Activated CD4-positive, alpha-beta T cell treated with anti-CD3 and anti-CD28 coated beads, Interleukin-2, amount 10 ng/mL, durations not matched to agents 7 days and 5 days (primary cell): ENCODE measurements at regions of chr13 and their contacts with region 1.

Region 1: GRCh38 chr13:29059800-29060199 is 239.7 kb downstream of the MTUS2 start:
- DNase-seq: no peak
- H3K4me3 Mint-ChIP-seq: no peak overlapping the region
- H3K27ac Mint-ChIP-seq: no peak overlapping the region
- H3K4me1 Mint-ChIP-seq: no peaks in the 10 kb centered on the region
- H3K27me3 Mint-ChIP-seq: peaks cover 3% of the 10 kb centered on the region

Region 2: GRCh38 chr13:29049524-29049923 is 10.3 kb before region 1 on chr13:
- CTCF ChIA-PET with region 1: no interaction called
- POLR2A ChIA-PET with region 1: no interaction called
- DNase-seq: no peak
- H3K4me3 Mint-ChIP-seq: no peak overlapping the region
- H3K27ac Mint-ChIP-seq: no peak overlapping the region
- H3K4me1 Mint-ChIP-seq: no peaks in the 10 kb centered on the region
- H3K27me3 Mint-ChIP-seq: no peaks in the 10 kb centered on the region

Region 3: DNA sequence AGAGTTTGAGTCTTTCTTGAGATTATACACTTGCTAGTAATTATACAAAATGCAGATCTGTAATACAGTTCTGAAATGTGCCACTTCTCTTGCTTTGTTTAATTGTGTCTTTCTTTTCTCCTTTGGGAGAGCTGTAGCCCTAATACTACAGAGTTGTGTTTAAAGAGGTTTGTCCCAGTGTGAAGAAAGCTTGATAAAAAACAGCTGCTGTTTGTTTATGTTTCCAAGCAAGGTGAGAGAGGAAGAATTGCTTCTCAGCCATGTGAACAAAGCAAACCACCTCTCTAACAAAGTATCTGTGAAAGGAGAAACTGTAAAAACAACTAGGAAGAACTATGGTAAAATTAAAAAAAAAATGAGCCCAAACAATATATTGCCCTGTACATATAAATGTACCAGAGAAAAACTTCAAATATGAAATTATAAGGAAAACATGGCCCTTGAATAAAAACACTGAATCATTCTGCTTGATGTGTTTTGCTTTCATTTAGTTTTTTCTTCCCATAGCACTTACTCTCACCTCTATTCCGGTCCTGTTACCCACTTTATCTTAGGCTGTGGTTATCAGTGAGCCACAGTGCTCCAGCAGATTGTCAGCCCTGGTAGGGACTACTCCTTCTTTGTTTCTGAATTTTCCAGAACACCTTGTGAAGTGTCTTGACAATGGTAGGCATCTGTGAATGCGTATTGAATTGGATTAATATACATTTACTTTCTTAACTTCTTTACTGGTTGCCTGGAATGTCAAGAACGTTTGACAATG is 17.4 kb after region 1 on chr13:
- CTCF ChIA-PET with region 1: no interaction called
- POLR2A ChIA-PET with region 1: interaction called, 11 read pairs
- DNase-seq: no peak
- H3K4me3 Mint-ChIP-seq: no peak overlapping the region
- H3K27ac Mint-ChIP-seq: no peak overlapping the region
- H3K4me1 Mint-ChIP-seq: peaks cover 18% of the 10 kb centered on the region
- H3K27me3 Mint-ChIP-seq: peaks cover 10% of the 10 kb centered on the region